Activated naive CD4-positive, alpha-beta T cell treated with anti-CD3 and anti-CD28 coated beads for 36 hours (primary cell): ENCODE measurements at regions of chr17 and their contacts with region 1.

Region 1: DNA sequence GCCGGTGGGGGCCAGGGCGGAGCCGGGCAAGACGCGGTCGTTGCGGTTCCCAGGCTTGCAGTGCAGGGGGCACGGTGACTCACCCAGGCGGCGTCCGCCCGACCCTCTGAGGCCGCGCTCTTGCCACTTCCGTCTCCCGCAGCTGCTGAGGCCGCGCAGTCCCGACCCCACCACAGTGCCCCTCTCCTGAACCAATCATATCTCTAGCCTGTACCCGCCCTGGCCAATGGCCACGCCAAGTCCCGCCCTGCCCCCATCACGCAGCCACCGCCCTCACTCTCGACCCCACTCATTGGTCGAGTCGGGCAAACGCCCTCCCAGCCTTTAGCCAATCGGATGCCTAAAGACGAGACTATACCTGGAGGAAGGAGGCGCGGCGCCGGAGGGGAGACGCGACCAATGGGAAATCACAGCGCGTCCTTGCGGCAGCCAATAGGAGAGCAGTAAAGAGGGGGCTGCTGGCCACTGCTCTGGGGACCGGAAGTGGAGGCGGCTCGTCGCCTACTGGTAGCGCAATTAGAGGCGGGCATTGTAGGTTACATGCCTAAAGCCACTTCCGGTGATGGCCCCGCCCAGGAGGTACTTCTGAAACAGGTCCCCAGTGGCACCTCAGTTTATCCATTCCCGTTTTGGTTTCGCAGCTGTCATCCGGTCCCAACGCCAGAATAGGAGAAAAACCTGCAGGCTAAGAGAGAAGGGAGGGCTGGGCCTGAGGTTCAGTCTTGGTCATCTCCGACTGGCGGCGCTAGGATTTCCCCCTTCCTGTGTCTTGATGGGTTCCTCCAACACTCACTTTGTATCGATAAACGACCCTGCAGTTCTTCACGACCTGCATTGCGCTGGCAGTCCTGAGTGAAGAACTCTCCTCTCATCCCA is 3.5 kb upstream of the MTMR4 start:
- DNase-seq: peak; percentile 100
- H3K4me3 Mint-ChIP-seq: peak overlapping the region; percentile 95
- H3K27ac Mint-ChIP-seq: peak overlapping the region; percentile 95
- H3K4me1 Mint-ChIP-seq: peaks cover 38% of the 10 kb centered on the region
- H3K27me3 Mint-ChIP-seq: no peaks in the 10 kb centered on the region

Region 2: GRCh38 chr17:58219001-58219788 is 298.8 kb before region 1 on chr17 and contains the start of gene MKS1:
- CTCF ChIA-PET with region 1: no interaction called
- intact Hi-C with region 1: loop called (anchors 1 kb)
- DNase-seq: peak; percentile 97
- H3K4me3 Mint-ChIP-seq: peak within 1 kb of the TSS; percentile 82
- H3K27ac Mint-ChIP-seq: peak within 1 kb of the TSS; percentile 92
- H3K4me1 Mint-ChIP-seq: peaks cover 25% of the 10 kb centered on the region
- H3K27me3 Mint-ChIP-seq: no peaks in the 10 kb centered on the region
- total RNA-seq, gene MKS1: 27.1 to 29.2 TPM

Region 3: GRCh38 chr17:58352014-58352842 is 165.7 kb before region 1 on chr17 and contains the start of gene SUPT4H1:
- CTCF ChIA-PET with region 1: no interaction called
- intact Hi-C with region 1: loop called (anchors 1 kb)
- DNase-seq: peak; percentile 92
- H3K4me3 Mint-ChIP-seq: peak within 1 kb of the TSS; percentile 100
- H3K27ac Mint-ChIP-seq: peak within 1 kb of the TSS; percentile 97
- H3K4me1 Mint-ChIP-seq: peaks cover 47% of the 10 kb centered on the region
- H3K27me3 Mint-ChIP-seq: no peaks in the 10 kb centered on the region
- total RNA-seq, gene SUPT4H1: 76.6 to 76.9 TPM

Region 4: DNA sequence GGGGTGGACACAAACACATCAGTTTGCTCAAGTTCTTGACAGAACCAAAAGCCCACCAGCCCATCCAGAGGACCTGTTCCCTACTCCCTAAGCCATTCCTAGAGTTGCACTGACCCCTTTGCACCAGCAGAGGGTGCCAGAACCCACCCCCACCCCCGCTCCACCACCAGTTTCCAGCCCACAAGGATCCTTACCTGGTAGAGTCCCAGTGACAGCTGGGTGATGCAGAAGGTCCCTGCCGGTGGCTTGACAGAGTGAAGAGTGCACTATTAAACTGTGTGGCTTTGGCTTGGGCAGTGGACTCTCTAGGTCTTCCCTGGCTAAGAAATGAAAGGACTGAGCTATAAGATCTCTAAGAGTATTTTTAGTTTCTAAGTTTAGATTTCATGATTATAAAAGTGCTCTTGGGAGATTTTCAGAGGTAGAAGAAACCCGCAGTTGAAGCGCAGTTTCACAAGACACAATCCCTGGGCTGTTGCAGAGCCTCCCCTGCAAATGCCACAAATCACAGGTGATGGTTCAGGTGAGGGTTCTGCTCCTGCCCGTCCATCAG is 69.8 kb after region 1 on chr17:
- CTCF ChIA-PET with region 1: interaction called, 17 read pairs
- intact Hi-C with region 1: loop called (anchors 1 kb)
- DNase-seq: peak; percentile 76
- H3K4me3 Mint-ChIP-seq: no peak overlapping the region
- H3K27ac Mint-ChIP-seq: no peak overlapping the region
- H3K4me1 Mint-ChIP-seq: peaks cover 2% of the 10 kb centered on the region
- H3K27me3 Mint-ChIP-seq: no peaks in the 10 kb centered on the region

Region 5: DNA sequence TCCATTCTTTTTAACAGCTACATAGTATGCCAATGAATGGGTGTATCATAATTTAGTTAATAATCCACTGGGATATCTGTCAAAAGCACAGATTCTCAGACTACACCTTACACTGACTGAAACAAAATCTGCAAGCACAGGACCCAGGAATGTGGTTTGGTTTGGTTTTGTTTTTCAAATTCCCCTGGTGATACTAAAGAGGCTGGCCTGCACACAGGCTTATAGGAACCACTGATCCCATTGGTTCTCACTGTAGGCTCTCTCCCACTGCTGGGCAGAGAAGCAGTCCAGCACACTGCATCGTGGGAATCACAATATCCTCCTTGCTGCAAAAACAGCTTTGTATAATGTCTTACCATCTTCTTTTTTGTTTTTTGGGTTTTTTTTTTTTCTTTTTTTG is 106.8 kb after region 1 on chr17:
- CTCF ChIA-PET with region 1: no interaction called
- intact Hi-C with region 1: no loop called
- DNase-seq: no peak
- H3K4me3 Mint-ChIP-seq: no peak overlapping the region
- H3K27ac Mint-ChIP-seq: no peak overlapping the region
- H3K4me1 Mint-ChIP-seq: no peaks in the 10 kb centered on the region
- H3K27me3 Mint-ChIP-seq: no peaks in the 10 kb centered on the region

Region 6: DNA sequence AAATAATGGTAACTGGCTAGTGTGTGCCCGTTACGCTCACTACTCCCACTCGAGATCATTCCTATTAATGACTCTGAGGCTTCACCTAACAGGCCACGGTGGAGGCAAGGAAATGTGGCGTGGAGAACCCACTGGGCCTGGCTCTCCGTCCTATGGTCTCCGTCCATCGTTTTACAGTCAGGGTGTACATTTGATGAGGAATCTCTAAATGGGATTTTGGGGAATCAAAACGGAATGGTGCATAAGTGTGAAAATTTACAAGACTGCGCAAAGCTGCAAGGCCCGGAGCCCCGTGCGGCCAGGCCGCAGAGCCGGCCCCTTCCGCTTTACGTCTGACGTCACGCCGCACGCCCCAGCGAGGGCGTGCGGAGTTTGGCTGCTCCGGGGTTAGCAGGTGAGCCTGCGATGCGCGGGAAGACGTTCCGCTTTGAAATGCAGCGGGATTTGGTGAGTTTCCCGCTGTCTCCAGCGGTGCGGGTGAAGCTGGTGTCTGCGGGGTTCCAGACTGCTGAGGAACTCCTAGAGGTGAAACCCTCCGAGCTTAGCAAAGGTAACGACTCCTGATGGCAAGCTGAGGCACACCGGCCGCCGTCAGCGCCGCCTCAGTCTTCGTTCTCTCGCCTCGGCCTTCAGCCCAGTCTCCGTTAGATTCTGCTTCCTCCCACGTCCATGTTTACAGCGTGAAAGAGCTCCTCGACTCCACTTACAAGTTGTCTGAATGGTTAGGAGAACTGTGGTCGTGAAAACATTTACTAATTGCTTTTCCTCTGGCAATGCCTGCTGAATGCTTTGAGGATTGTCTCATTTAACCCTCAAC is 174.5 kb after region 1 on chr17 and contains the start of gene RAD51C:
- CTCF ChIA-PET with region 1: interaction called, 3 read pairs
- intact Hi-C with region 1: loop called (anchors 1 kb)
- DNase-seq: peak; percentile 92
- H3K4me3 Mint-ChIP-seq: peak within 1 kb of the TSS; percentile 91
- H3K27ac Mint-ChIP-seq: peak within 1 kb of the TSS; percentile 93
- H3K4me1 Mint-ChIP-seq: peaks cover 31% of the 10 kb centered on the region
- H3K27me3 Mint-ChIP-seq: no peaks in the 10 kb centered on the region
- total RNA-seq, gene RAD51C: 57.7 to 64.6 TPM

Region 7: GRCh38 chr17:59155439-59156182 is 637.6 kb after region 1 on chr17 and contains the start of gene PRR11:
- CTCF ChIA-PET with region 1: no interaction called
- intact Hi-C with region 1: loop called (anchors 1 kb)
- DNase-seq: peak; percentile 97
- H3K4me3 Mint-ChIP-seq: no peak within 1 kb of the TSS
- H3K27ac Mint-ChIP-seq: no peak within 1 kb of the TSS
- H3K4me1 Mint-ChIP-seq: peaks cover 25% of the 10 kb centered on the region
- H3K27me3 Mint-ChIP-seq: no peaks in the 10 kb centered on the region
- total RNA-seq, gene PRR11: 77.4 to 82.1 TPM

Region 8: DNA sequence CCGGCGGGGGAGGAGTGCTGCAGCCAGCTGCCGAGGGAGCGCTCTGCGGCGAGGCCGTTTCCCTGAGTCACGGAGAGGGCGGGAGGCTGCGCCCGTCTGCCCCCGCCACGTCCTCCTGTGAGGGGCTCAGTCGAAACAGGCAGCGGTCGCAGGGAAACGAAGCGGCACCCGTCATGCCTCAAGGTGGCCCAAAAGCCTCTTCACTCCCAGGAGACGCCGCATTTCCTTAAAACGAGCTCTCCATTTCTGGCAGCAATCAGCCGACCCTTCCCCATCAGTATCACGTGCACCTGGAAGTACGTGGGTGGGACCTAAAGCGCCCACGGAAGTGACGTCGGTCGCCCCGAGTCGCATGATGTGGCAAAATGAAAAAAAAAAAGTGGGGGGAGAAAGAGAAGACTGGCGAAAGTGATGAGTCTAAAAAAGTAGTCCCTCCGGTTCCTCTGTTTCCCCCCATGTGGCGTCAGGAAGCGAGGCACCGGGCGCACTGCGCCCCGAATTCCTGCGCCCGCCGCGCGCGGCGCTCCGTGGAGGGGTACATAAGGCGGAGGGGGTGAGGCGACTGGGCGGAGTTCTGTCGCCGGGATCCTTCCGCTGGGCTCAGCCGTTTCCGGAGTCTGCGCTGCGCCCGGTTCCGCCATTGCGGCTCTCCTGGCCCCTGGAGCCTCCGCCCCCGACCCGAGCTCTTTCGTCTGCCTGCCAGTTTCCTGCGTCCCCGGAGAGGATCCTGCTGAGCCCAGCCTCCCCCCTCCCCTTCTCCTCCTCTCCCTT is 1101.5 kb after region 1 on chr17 and contains the start of gene CLTC:
- CTCF ChIA-PET with region 1: no interaction called
- intact Hi-C with region 1: loop called (anchors 5 kb)
- DNase-seq: peak; percentile 94
- H3K4me3 Mint-ChIP-seq: peak within 1 kb of the TSS; percentile 93
- H3K27ac Mint-ChIP-seq: peak within 1 kb of the TSS; percentile 96
- H3K4me1 Mint-ChIP-seq: peaks cover 49% of the 10 kb centered on the region
- H3K27me3 Mint-ChIP-seq: no peaks in the 10 kb centered on the region
- total RNA-seq, gene CLTC: 127 to 134 TPM